OCI-LY7 (cell line): ENCODE measurements at regions of chr1 and their contacts with region 1.

Region 1: GRCh38 chr1:207963427-207964194 is 52.7 kb upstream of the CD34 start:
- DNase-seq: peak; percentile 83
- H3K4me3 ChIP-seq: peak overlapping the region; percentile 62
- H3K27ac ChIP-seq: no peak overlapping the region
- H3K4me1 ChIP-seq: peaks cover 9% of the 10 kb centered on the region
- CTCF ChIP-seq: peak; percentile 88

Region 2: DNA sequence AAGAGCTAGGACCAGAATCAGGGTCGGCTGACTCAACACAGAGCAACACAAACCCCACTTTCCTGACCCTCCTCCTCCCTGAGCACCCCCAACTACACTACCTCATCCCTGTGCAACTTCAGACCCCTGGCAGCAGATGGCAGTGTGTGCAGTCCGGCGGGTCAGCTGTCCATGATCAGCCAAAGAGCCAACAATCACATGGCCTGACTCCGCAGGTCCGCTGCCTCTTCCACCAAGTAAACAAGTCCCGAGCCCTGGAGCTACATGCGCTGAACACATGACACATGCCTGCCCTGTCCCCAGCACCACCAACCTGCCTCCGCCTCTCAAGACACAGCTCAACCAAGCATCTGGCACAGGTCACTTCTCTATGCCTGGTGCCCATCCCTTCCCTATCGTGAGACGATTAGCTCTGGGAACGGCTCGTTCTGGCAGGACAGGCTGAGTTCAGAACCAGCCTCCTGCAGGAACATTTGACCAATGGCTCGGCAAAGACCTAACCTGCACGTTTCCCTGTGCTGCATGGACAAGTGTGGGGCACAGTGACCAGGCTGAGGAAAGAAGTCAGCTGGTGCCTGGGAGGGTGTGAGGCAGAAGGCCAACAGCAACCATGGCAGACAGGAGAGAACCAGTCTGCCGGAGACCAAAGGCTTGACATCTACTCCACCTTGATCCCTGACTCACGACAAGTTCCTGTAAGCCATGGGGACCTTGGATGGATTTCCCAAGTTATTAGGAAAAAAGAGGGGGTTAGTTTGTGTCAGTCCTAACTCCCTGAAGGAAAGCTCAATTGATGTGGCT is 151.5 kb before region 1 on chr1:
- CTCF ChIA-PET with region 1: no interaction called
- POLR2A ChIA-PET with region 1: no interaction called
- intact Hi-C with region 1: loop called (anchors 5 kb)
- DNase-seq: no peak
- H3K4me3 ChIP-seq: no peak overlapping the region
- H3K27ac ChIP-seq: no peak overlapping the region
- H3K4me1 ChIP-seq: peaks cover 13% of the 10 kb centered on the region
- CTCF ChIP-seq: peak; percentile 69

Region 3: DNA sequence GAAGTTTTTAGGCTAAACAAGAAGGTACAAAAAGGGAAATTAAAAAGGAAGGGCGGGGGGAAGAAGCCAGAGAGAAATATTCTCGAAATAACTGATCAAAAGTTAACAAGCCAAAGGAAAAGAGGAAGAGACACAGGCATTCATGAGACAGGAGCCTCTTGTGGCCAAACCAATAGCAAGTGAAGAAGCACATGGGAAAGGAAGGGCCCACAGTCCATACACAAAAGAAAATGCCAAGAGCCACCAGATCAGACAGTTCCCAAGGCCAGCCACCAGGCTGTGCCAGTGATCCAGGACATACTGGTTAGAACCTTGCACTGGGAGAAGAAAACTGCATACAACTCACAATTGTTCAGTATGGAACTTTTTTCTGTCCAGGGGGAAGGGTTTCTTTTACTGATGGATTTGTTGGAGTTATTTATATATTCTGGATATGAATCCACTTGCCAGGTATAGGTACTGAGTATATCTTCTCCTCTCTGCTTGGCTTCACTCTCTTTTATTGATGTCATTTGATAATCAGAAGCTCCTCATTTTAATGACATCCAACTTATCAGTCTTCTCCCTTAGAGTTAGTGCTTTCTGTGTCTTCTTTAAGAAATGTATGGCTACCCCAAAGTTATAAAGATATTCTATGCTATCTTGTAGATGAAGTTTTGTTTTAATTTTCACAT is 135.0 kb before region 1 on chr1:
- CTCF ChIA-PET with region 1: no interaction called
- POLR2A ChIA-PET with region 1: no interaction called
- intact Hi-C with region 1: loop called (anchors 1 kb)
- DNase-seq: peak; percentile 68
- H3K4me3 ChIP-seq: no peak overlapping the region
- H3K27ac ChIP-seq: no peak overlapping the region
- H3K4me1 ChIP-seq: peaks cover 46% of the 10 kb centered on the region
- CTCF ChIP-seq: peak; percentile 77

Region 4: DNA sequence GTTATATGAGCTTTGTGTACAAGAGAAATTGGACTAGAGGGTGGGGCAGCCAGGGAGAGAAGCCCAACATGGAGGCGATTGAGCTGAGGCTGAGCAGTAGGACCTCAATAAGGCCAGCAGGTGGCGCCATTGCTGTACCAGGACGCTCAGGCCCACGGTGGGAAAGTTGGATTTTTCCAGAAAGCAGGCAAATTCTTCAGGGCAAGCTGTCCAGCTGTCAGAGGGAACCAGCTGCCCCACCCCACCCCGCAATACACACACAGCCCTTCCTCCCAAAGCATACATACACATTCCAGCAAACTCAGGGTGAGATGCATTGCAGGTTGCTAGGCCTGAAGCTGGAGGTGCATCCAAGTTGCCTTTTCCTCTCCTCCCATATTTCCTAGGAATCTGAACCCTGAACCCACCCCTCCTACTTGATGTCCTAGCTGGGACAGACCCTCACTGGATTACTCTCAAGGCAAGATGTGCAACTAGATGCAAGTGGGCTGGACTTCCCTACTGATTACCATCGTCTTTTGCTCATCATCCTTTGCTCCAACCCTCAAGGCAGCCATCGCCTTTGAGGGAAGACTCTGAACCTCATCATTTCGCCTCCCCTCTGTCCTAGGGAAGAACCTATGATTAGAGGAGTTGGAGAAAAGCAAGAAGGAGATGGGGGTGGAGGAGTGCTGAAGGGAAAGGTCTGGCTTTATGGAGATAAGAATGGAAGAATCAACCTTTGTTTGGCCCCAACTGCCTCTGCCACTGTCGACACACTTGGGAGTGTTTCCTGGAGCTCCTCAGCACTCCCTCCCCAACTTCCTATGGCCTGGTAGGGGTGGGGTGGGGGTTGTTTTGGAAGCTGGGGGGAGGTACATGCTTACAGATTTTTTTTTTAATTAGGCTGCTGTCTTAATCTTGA is 78.2 kb before region 1 on chr1:
- CTCF ChIA-PET with region 1: interaction called, 18 read pairs
- POLR2A ChIA-PET with region 1: interaction called, 5 read pairs
- intact Hi-C with region 1: loop called (anchors 1 kb)
- DNase-seq: peak; percentile 76
- H3K4me3 ChIP-seq: no peak overlapping the region
- H3K27ac ChIP-seq: no peak overlapping the region
- H3K4me1 ChIP-seq: peaks cover 5% of the 10 kb centered on the region
- CTCF ChIP-seq: peak; percentile 96

Region 5: DNA sequence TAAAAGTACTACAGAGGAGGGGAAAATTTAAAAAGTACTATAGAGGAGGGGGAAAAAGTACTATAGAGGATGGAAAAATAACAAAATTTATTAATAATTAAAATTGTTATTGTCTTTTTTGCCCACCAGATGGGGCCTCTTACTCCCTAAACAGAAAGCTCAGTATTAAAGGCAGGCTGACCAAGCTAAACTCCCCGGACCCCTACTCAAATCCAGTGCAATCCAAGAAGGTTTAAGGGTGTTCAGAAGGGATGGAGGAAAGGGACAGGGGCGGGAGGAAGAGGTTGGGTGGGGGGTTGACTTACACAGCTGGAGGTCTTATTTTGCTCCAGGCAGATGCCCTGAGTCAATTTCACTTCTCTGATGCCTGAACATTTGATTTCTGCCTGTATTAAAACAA is 66.4 kb before region 1 on chr1:
- CTCF ChIA-PET with region 1: no interaction called
- POLR2A ChIA-PET with region 1: no interaction called
- intact Hi-C with region 1: loop called (anchors 2 kb)
- DNase-seq: no peak
- H3K4me3 ChIP-seq: no peak overlapping the region
- H3K27ac ChIP-seq: no peak overlapping the region
- H3K4me1 ChIP-seq: no peaks in the 10 kb centered on the region
- CTCF ChIP-seq: peak; percentile 63

Region 6: DNA sequence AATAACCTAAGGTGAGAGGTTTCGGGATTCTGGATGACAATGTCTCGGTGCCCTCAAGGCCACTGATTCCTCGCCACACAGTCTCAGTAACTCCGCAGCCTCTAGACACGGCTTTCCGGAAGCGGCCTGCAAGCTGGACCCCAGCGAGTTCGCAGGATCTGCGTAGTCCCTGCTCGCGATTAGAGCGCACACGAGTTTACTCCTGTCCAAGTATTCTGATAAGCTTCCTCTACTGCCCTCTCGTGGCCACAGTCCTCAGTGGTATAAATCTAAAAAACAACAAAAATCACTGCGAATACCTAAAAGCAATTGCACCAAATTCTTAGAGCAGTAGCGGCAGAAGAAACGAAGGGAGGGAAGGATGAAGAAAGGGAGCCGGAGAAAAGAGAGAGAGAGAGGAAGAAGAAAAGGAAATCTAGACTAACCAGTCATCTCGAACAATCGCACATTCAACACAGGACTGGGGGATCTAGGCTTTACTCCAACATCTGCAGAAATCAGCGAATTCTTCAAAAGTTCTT is 281.6 kb after region 1 on chr1:
- CTCF ChIA-PET with region 1: no interaction called
- POLR2A ChIA-PET with region 1: no interaction called
- intact Hi-C with region 1: no loop called
- DNase-seq: peak; percentile 82
- H3K4me3 ChIP-seq: peak overlapping the region; percentile 67
- H3K27ac ChIP-seq: no peak overlapping the region
- H3K4me1 ChIP-seq: peaks cover 7% of the 10 kb centered on the region
- CTCF ChIP-seq: peak; percentile 89